ENCODE measurements at regions of chr7 and their contacts with region 1.

Region 1: DNA sequence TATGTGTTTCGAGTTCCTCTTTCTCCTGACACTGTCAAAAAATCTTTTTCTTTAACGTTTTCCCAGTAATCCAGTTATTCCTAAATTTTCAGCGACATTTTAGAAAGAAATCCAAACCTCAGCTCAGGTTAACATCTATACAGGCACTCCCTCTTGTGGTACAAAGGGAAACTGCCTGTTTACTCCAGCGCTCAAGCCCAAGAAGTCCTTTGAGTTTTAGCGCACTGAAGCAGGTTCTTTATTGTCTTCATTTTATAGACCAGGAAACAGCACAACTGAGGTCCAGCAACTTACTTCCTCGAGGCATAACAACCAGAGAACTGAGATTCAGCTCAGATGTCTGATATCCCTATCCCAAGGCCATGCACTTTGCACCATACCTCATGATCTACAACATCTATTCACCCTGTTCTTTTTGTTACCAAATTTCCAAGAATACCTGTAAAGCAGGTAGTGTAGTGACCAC is 287.2 kb upstream of the MKLN1 start:
- DNase-seq: peak; percentile 69
- ATAC-seq: peak; percentile 81
- H3K4me3 Mint-ChIP-seq: peak overlapping the region; percentile 35
- H3K27ac Mint-ChIP-seq: peak overlapping the region; percentile 66
- H3K4me1 Mint-ChIP-seq: peaks cover 54% of the 10 kb centered on the region
- H3K27me3 Mint-ChIP-seq: no peaks in the 10 kb centered on the region

Region 2: GRCh38 chr7:130887182-130888016 is 153.1 kb before region 1 on chr7:
- CTCF ChIA-PET with region 1: interaction called, 15 read pairs
- DNase-seq: no peak
- ATAC-seq: no peak
- H3K4me3 Mint-ChIP-seq: no peak overlapping the region
- H3K27ac Mint-ChIP-seq: peak overlapping the region; percentile 45
- H3K4me1 Mint-ChIP-seq: peaks cover 51% of the 10 kb centered on the region
- H3K27me3 Mint-ChIP-seq: no peaks in the 10 kb centered on the region

Region 3: GRCh38 chr7:130982160-130982638 is 58.3 kb before region 1 on chr7:
- CTCF ChIA-PET with region 1: interaction called, 54 read pairs
- DNase-seq: no peak
- ATAC-seq: peak; percentile 78
- H3K4me3 Mint-ChIP-seq: no peak overlapping the region
- H3K27ac Mint-ChIP-seq: no peak overlapping the region
- H3K4me1 Mint-ChIP-seq: peaks cover 46% of the 10 kb centered on the region
- H3K27me3 Mint-ChIP-seq: no peaks in the 10 kb centered on the region

Region 4: DNA sequence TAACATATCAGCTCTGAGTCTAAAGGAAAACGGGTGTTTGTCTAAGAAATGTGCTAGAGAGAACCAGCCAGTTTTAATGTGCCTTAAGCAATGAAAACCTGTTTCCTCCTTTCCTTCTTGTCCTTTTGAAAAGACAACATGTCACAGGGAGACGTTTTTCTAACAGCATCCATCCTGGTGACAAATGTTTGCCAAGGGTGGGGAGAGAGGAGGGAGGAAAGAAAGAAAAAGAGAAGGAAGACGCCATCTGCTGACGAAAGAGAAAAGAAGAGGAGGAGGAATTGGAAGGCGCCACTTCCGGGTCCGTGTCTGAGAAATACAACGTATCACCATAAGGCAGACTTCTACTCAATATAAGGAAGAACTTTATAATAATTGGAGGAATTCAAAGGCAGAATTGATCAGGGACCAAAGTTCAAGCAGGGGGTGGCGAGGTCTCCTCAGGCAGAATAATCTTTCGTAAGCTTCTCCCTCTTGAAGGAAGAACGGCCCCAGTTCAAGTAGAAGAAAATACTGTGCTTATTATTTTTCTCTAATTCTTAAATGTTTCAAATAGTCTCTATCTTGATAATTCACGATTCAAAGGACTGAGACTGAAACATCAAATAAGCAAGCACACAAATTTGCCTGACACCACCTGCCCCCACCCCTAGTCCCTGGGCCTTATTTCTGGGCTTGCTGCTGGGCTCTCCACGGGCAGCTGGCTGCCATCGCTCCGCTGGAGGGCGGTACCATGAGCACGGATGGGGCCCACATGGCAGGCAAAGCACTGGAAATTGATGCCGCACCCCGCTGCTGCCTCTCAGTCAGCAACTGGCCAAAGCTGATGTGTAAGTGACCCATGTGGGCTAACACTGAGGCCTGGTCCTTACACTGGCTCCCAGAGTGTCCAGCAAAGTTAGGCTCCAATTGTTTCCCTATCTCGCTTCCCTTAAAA is 32.8 kb before region 1 on chr7:
- CTCF ChIA-PET with region 1: interaction called, 13 read pairs
- DNase-seq: peak; percentile 81
- ATAC-seq: peak; percentile 58
- H3K4me3 Mint-ChIP-seq: peak overlapping the region; percentile 49
- H3K27ac Mint-ChIP-seq: peak overlapping the region; percentile 93
- H3K4me1 Mint-ChIP-seq: peaks cover 80% of the 10 kb centered on the region
- H3K27me3 Mint-ChIP-seq: no peaks in the 10 kb centered on the region

Region 5: DNA sequence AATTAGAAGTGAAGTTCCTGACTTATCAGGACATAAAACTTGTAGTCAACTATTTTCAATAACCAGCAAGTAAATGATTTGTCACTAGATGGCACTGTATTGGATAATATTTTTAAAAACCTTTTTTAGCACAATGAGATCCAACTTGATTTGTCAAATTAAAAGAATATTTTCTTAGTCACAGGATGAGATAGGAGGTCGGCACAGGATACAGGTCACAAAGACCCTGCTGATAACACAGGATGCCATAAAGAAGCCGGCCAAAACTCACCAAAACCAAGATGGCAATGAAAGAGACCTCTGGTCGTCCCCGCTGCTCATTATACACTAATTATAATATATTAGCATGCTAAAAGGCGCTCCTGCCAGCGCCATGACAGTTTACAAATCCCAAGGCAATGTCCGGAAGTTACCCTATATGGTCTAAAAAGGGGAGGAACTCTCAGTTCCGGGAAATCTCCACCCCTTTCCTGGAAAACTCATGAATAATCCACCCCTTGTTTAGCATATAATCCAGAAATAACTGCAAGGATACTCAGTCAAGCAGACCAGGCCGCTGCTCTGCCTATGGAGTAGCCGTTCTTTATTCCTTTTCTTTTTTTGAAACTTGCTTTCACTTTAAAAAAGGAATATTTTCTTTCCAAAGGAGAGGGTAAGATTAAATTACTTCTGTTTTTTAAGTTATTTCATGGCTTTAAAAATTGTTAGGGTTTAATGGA is 31.4 kb after region 1 on chr7:
- CTCF ChIA-PET with region 1: interaction called, 10 read pairs
- DNase-seq: peak; percentile 51
- ATAC-seq: peak; percentile 10
- H3K4me3 Mint-ChIP-seq: no peak overlapping the region
- H3K27ac Mint-ChIP-seq: peak overlapping the region; percentile 38
- H3K4me1 Mint-ChIP-seq: peaks cover 49% of the 10 kb centered on the region
- H3K27me3 Mint-ChIP-seq: no peaks in the 10 kb centered on the region